Posterior cingulate gyrus (tissue), 11 donors: ENCODE measurements at regions of chr18 and their contacts with region 1.

Region 1: DNA sequence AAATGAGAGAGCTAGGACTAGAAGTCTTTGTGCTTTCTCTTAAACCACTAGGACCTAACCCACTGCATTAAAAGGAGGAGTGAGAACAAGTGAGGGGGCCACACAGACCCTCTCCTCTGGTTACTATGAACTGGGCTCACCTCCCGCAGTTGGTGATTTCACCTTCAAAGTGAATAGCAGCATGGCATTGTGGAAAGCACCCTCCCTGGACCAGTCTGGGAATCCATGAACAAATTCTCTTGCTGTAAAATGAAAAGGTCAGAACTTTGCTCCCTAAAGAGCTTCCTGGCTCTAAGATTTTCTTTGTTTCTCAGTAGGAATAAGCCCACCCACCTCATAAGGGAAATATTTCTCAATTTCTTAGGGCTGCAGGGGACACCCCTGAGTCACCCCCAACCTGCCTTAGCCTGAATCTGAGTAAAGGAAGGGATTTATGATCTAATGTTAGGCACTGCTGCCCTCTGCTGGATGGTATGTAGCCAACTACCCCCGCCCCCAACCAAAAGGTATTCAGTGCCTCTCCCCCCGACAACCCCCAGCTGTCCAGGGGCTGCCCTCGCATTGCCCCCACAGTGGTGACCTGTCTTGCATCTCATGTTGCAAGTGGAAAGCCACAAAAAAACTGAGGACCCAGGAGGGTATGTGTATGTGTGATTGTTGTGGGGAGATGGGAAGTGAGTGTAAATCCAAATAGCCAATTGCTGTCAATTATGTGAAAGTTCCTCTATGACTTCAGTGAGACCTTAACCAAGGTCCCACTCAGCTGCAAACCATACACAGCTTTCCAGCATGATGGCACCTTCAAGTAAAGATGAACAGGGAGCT is 230.9 kb upstream of the SLC14A2 start:
- DNase-seq: peak in 7 of 10 donors; percentile 20 to 88 (median 51)

Region 2: DNA sequence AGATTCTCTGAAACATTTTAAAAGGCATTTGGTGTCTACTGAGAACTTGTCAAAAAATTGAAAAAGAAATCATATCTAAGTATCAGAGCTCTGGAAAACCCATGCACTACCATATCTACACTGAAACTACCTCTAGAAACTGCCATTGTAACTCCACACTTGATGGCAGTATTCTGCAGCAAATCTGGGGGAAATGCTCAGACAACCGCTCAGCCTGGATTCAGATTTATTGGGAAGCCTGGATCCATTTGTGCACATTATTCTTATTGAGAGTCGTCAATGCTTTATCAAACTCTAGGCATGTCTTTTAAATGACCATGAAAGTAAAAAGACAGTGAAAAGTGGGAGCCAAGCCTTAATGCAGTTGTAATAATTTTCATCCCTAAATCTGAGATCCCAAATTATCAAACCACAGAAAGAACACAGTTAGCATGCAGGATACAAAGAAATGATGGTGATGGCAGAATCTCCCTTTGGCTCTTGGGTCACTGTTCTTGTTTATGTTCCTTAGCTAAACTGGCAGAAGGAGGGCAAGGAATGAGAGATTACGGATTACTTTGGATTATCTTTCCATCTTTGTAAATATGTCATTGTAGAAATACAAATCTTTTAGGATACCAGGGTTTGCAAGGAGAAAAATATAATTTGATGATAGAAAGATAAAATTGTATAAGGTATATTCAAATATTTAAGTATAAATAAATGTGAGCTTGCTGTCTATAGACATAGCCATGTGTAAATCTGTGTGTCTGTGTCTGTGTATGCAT is 1594.9 kb before region 1 on chr18:
- intact Hi-C with region 1: loop called (anchors 10 kb)
- DNase-seq: peak in 3 of 10 donors; percentile 7 to 63 (median 12)

Region 3: GRCh38 chr18:44130376-44130942 is 1253.9 kb before region 1 on chr18:
- intact Hi-C with region 1: loop called (anchors 10 kb)
- DNase-seq: no peak